ENCODE measurements at regions of chr4 and their contacts with region 1.

Region 1: GRCh38 chr4:40897557-40898203 is 147.9 kb downstream of the NSUN7 start:
- DNase-seq: peak; percentile 89
- H3K4me3 ChIP-seq: peak overlapping the region; percentile 34
- H3K27ac ChIP-seq: no peak overlapping the region
- H3K4me1 ChIP-seq: no peaks in the 10 kb centered on the region
- H3K27me3 ChIP-seq: no peaks in the 10 kb centered on the region
- CTCF ChIP-seq: peak; percentile 87

Region 2: GRCh38 chr4:40736910-40737309 is 160.8 kb before region 1 on chr4:
- CTCF ChIA-PET with region 1: interaction called, 4 read pairs
- POLR2A ChIA-PET with region 1: no interaction called
- intact Hi-C with region 1: loop called (anchors 5 kb)
- DNase-seq: peak; percentile 53
- H3K4me3 ChIP-seq: no peak overlapping the region
- H3K27ac ChIP-seq: no peak overlapping the region
- H3K4me1 ChIP-seq: peaks cover 1% of the 10 kb centered on the region
- H3K27me3 ChIP-seq: no peaks in the 10 kb centered on the region
- CTCF ChIP-seq: peak; percentile 59

Region 3: GRCh38 chr4:41077628-41078027 is 179.9 kb after region 1 on chr4:
- CTCF ChIA-PET with region 1: no interaction called
- POLR2A ChIA-PET with region 1: no interaction called
- intact Hi-C with region 1: no loop called
- DNase-seq: no peak
- H3K4me3 ChIP-seq: no peak overlapping the region
- H3K27ac ChIP-seq: no peak overlapping the region
- H3K4me1 ChIP-seq: no peaks in the 10 kb centered on the region
- H3K27me3 ChIP-seq: no peaks in the 10 kb centered on the region
- CTCF ChIP-seq: no peak

Measured in A673 (cell line).